ENCODE measurements at regions of chr15 and their contacts with region 1.

Region 1: DNA sequence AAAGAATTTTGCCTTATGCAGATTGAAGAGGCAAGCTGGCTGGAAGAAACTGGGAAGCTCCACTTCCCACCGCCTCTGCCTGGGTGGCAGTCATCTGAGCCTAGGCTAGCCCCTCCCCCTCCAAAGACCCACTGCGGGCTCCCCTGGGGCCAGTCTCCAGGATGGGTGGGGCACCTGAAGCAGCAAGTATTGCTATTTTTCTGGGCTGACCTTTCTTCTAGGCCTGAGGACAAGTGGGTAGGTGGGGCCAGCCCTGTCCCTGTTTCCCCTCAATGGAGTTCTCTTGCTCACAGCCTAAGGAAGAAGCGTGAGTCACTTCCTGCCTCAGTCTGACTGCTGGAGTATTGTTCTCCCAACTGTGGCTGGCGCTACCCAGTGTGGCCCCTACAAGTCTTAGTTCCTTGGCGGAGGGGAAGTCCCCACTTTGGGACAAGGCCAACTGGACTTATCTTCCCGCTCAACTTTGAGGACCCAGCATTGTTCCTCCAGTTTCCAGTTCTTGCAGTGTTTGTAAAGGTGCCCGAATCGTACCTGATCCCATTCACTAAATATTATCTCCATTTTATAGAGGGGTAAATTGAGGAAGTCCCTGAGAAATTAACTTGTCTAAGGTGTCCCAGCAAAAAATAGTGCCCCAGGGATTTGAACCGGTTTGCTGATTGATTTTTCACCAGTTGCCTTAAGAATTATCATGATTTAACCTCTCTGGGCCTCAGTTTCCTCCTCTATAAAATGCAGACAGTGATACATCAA is 1.4 kb downstream of the FURIN start:
- DNase-seq: peak; percentile 78
- ATAC-seq: peak; percentile 65
- H3K4me3 Mint-ChIP-seq: peak overlapping the region; percentile 90
- H3K27ac Mint-ChIP-seq: peak overlapping the region; percentile 98
- H3K4me1 Mint-ChIP-seq: peaks cover 59% of the 10 kb centered on the region
- H3K27me3 Mint-ChIP-seq: peaks cover 5% of the 10 kb centered on the region

Region 2: GRCh38 chr15:90638201-90638691 is 231.5 kb before region 1 on chr15:
- CTCF ChIA-PET with region 1: no interaction called
- POLR2A ChIA-PET with region 1: no interaction called
- intact Hi-C with region 1: no loop called
- DNase-seq: no peak
- ATAC-seq: no peak
- H3K4me3 Mint-ChIP-seq: no peak overlapping the region
- H3K27ac Mint-ChIP-seq: no peak overlapping the region
- H3K4me1 Mint-ChIP-seq: peaks cover 5% of the 10 kb centered on the region
- H3K27me3 Mint-ChIP-seq: no peaks in the 10 kb centered on the region

Region 3: GRCh38 chr15:90660195-90660998 is 209.4 kb before region 1 on chr15:
- CTCF ChIA-PET with region 1: no interaction called
- POLR2A ChIA-PET with region 1: no interaction called
- intact Hi-C with region 1: loop called in 1 of 2 experiments (anchors 1 kb)
- DNase-seq: peak; percentile 89
- ATAC-seq: peak; percentile 96
- H3K4me3 Mint-ChIP-seq: peak overlapping the region; percentile 52
- H3K27ac Mint-ChIP-seq: peak overlapping the region; percentile 43
- H3K4me1 Mint-ChIP-seq: peaks cover 73% of the 10 kb centered on the region
- H3K27me3 Mint-ChIP-seq: peaks cover 47% of the 10 kb centered on the region

Region 4: DNA sequence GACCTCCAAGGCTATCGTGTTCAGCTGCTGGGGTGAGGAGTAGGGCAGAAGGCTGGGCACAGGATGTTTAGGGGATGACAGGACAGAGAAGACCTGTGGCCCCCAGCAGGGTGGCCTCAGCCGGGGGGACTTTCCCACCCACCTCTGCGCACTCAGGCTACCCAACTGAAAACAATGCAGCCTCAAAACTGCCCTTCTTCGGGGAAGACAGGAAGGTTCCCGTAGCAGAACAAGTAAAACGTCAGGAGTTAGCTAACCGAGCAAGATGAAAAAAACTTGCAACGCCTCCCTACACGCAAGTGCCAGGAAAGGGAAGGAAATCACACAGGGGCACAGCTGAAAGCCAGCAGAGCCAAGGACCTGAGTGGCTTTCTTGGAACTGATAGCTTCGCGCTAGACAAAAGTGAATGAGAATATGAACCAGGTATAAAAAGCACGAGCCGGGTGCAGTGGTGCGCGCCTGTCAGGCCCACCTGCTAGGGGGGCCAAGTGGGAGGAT is 39.8 kb before region 1 on chr15:
- CTCF ChIA-PET with region 1: interaction called, 6 read pairs
- POLR2A ChIA-PET with region 1: interaction called, 19 read pairs
- intact Hi-C with region 1: loop called (anchors 1 kb)
- DNase-seq: peak; percentile 89
- ATAC-seq: peak; percentile 87
- H3K4me3 Mint-ChIP-seq: peak overlapping the region; percentile 66
- H3K27ac Mint-ChIP-seq: peak overlapping the region; percentile 99
- H3K4me1 Mint-ChIP-seq: peaks cover 54% of the 10 kb centered on the region
- H3K27me3 Mint-ChIP-seq: no peaks in the 10 kb centered on the region

Region 5: GRCh38 chr15:90851114-90851513 is 18.7 kb before region 1 on chr15:
- CTCF ChIA-PET with region 1: interaction called, 4 read pairs
- POLR2A ChIA-PET with region 1: interaction called, 7 read pairs
- intact Hi-C with region 1: loop called (anchors 1 kb)
- DNase-seq: peak; percentile 69
- ATAC-seq: peak; percentile 33
- H3K4me3 Mint-ChIP-seq: peak overlapping the region; percentile 41
- H3K27ac Mint-ChIP-seq: peak overlapping the region; percentile 95
- H3K4me1 Mint-ChIP-seq: peaks cover 53% of the 10 kb centered on the region
- H3K27me3 Mint-ChIP-seq: no peaks in the 10 kb centered on the region

Region 6: GRCh38 chr15:90886041-90886614 is 16.4 kb after region 1 on chr15:
- CTCF ChIA-PET with region 1: interaction called, 12 read pairs
- POLR2A ChIA-PET with region 1: interaction called, 6 read pairs
- intact Hi-C with region 1: no loop called
- DNase-seq: peak; percentile 90
- ATAC-seq: peak; percentile 43
- H3K4me3 Mint-ChIP-seq: no peak overlapping the region
- H3K27ac Mint-ChIP-seq: peak overlapping the region; percentile 31
- H3K4me1 Mint-ChIP-seq: peaks cover 12% of the 10 kb centered on the region
- H3K27me3 Mint-ChIP-seq: peaks cover 3% of the 10 kb centered on the region

Measured in activated CD4-positive, alpha-beta T cell treated with anti-CD3 and anti-CD28 coated beads for 36 hours (primary cell).